ENCODE measurements at regions of chr1 and their contacts with region 1.

Region 1: GRCh38 chr1:43763497-43763973 is 56.2 kb downstream of the ST3GAL3 start:
- DNase-seq: no peak
- ATAC-seq: peak; percentile 94

Region 2: GRCh38 chr1:43936431-43937151 is 173.1 kb after region 1 on chr1:
- intact Hi-C with region 1: loop called (anchors 5 kb)
- DNase-seq: peak; percentile 66
- ATAC-seq: peak; percentile 47

Measured in left ventricle myocardium superior (tissue), 1 donor.